Ascending aorta (tissue), 2 donors: ENCODE measurements at regions of chr19 and their contacts with region 1.

Region 1: GRCh38 chr19:7629347-7630054 is at the starts of genes PET100 and XAB2:
- DNase-seq: peak; percentile 95 to 99
- H3K4me3 ChIP-seq: peak within 1 kb of the TSS; percentile 94 to 96
- H3K27ac ChIP-seq: peak within 1 kb of the TSS; percentile 79 to 88
- H3K4me1 ChIP-seq: peaks cover 7 to 27% of the 10 kb centered on the region in 2 donors
- H3K27me3 ChIP-seq: no peaks in the 10 kb centered on the region
- CTCF ChIP-seq: no peak
- total RNA-seq, gene PET100: not detected
- total RNA-seq, gene XAB2: 18.4 TPM

Region 2: GRCh38 chr19:7705387-7706187 is 76.1 kb after region 1 on chr19:
- intact Hi-C with region 1: no loop called
- DNase-seq: no peak
- H3K4me3 ChIP-seq: no peak overlapping the region
- H3K27ac ChIP-seq: peak overlapping the region in 1 of 2 donors; percentile 16
- H3K4me1 ChIP-seq: no peaks in the 10 kb centered on the region
- H3K27me3 ChIP-seq: no peaks in the 10 kb centered on the region
- CTCF ChIP-seq: no peak

Region 3: DNA sequence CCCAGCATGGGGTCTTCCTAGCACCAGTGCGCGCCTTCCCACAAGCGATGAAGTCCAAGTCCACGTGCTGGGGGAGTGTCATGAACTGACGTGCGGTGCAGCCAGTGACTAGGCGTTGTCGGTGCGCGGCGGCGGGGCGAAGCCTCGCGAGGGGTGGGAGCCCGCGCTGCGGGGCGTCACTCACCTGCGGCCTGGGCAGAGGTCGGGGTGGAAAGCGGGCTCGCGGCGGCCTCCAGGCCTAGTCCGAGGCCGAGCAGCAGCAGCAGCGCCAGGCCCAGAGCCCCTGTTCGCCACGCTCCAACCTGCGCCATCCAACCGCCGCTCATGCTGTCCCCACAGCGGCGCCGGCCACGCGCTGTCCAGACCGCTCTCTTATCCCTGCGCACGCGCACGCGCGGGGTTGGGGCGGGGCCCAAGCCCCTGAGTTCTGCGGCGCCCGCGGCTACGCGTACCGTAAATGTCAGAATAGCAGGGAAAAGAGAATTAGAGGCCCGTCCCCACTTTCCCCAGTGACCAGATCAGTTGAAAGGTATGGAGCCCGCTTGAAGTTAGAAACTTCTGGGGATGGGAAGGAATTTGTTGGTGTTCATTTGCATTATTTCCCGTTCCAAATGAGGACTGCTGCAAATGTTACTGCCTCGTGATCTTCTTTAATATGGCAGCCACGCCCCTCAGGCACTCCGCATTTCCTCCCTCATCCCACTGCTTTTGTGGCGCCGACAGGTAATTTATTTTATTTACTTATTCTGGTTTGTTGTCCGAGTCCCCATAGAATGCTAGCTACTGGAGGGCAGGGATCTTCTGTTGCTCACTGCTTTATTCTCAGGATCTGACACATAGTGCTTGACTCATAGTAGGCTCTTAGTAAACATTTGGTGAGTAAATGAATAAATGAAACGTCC is 678.7 kb after region 1 on chr19 and contains the start of gene CD320:
- intact Hi-C with region 1: loop called (anchors 5 kb)
- DNase-seq: peak; percentile 33 to 94
- H3K4me3 ChIP-seq: peak within 1 kb of the TSS; percentile 58 to 72
- H3K27ac ChIP-seq: peak within 1 kb of the TSS; percentile 50 to 59
- H3K4me1 ChIP-seq: peaks cover 4 to 11% of the 10 kb centered on the region in 2 donors
- H3K27me3 ChIP-seq: no peaks in the 10 kb centered on the region
- CTCF ChIP-seq: no peak
- total RNA-seq, gene CD320: 263 TPM